ENCODE measurements at regions of chr20 and their contacts with region 1.

Region 1: DNA sequence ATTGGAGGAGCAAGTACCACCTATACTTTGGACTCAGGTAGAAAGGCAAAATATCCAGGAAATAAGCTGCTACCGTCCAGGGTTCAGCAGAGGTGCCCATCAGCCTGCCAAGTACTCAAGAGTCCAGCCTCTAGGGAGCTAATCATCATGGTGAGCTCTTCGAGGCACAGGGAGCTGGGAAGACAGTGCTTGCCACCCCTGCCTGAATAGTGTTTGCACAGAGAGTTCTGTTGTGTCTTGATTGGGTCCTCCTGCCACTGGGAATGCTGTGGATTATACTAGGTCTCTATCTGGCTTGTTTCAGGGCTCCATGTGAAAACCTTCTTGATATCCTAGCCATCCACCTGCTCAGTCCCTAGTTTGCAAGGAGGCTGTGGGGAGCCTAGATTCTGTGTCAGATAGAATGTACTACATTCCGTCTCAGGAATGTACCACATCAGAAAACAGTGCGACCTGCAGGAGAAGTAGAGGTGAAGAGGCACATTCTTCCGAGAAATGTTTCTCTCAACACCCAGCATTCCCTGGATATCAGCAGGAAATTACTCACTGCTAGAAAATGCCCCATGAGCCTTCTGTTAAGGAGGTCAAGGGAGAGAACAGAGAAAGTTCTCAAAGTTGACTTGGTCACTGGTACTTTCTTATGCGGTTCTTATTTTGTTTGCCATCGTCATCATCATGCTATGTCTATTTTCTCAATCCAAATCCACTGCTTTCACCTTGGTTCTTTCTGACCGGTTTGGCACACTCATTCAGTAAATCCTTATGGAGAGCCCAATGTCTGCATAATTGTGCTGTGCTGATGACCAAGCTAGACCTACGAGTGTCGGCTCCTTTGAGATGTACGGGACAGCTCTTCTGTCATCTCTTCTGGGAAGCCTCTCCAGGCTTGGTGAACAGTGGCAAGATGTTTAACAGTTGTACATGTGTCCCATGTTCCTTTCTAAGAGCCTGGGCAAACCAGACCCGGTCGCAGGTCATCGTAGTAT is 30.7 kb downstream of the PTPN1 start:
- DNase-seq: peak; percentile 79
- H3K4me3 ChIP-seq: no peak overlapping the region
- H3K27ac ChIP-seq: peak overlapping the region; percentile 95
- H3K27me3 ChIP-seq: no peaks in the 10 kb centered on the region
- CTCF ChIP-seq: no peak

Region 2: GRCh38 chr20:50205889-50206288 is 335.0 kb before region 1 on chr20:
- CTCF ChIA-PET with region 1: no interaction called
- POLR2A ChIA-PET with region 1: interaction called, 12 read pairs
- DNase-seq: no peak
- H3K4me3 ChIP-seq: no peak overlapping the region
- H3K27ac ChIP-seq: no peak overlapping the region
- H3K27me3 ChIP-seq: no peaks in the 10 kb centered on the region
- CTCF ChIP-seq: no peak